GM13977 (cell line): ENCODE measurements at regions of chr20 and their contacts with region 1.

Region 1: DNA sequence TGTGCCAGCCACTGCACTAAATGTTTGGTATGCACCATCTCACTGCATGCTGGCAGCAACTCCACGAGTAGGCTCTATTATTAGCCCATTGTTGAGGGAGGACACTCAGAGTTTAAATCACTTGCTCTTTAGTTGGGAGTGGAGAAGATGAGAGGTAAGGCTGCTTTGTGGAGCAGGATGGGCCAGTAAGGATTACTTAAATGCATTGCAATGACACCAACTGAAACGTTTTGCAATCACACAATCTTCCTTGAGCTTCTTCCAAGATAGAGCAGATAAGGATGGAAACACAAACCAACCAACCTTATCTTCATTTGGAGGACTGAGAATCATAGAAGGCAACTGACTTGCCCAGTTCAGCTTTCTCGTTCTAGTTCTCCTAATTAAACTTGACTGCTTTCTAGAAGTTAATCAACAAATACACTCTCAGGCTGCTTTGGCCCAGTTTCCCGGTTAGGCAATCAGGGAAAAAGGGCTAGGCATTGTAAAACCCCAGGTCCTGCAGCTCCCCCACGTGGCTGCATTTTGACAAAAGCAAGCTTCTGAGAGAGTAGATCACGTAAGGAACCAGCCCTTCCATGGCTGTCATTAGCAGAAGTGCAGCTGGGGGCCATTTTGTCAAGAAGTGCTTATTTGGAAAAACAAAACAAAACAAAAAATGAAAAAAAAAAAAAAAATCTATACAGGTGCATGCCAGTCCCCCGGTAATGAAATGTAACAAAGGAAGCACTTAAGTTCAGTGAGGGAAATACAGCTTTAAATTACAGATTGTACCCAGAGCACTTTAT is 130.6 kb downstream of the BCAS1 start:
- DNase-seq: peak; percentile 58
- CTCF ChIP-seq: peak; percentile 85

Region 2: GRCh38 chr20:53413186-53413631 is 526.6 kb before region 1 on chr20:
- in situ Hi-C with region 1: loop called (anchors 10 kb)
- DNase-seq: peak; percentile 82
- CTCF ChIP-seq: peak; percentile 93

Region 3: GRCh38 chr20:53578492-53579222 is 361.1 kb before region 1 on chr20:
- in situ Hi-C with region 1: loop called (anchors 5 kb)
- DNase-seq: peak; percentile 69
- CTCF ChIP-seq: peak; percentile 60

Region 4: GRCh38 chr20:54062812-54063280 is 123.1 kb after region 1 on chr20:
- in situ Hi-C with region 1: loop called (anchors 10 kb)
- DNase-seq: peak; percentile 57
- CTCF ChIP-seq: peak; percentile 71